ENCODE measurements at regions of chr15 and their contacts with region 1.

Region 1: GRCh38 chr15:93302080-93302765 is 213.2 kb upstream of the RGMA start:
- DNase-seq: no peak
- ATAC-seq: no peak
- H3K4me3 Mint-ChIP-seq: no peak overlapping the region
- H3K27ac Mint-ChIP-seq: no peak overlapping the region
- H3K4me1 Mint-ChIP-seq: no peaks in the 10 kb centered on the region
- H3K27me3 Mint-ChIP-seq: no peaks in the 10 kb centered on the region

Region 2: GRCh38 chr15:92779874-92780273 is 522.3 kb before region 1 on chr15:
- CTCF ChIA-PET with region 1: no interaction called
- POLR2A ChIA-PET with region 1: no interaction called
- intact Hi-C with region 1: loop called in 1 of 2 experiments (anchors 5 kb)
- DNase-seq: no peak
- ATAC-seq: no peak
- H3K4me3 Mint-ChIP-seq: no peak overlapping the region
- H3K27ac Mint-ChIP-seq: no peak overlapping the region
- H3K4me1 Mint-ChIP-seq: no peaks in the 10 kb centered on the region
- H3K27me3 Mint-ChIP-seq: no peaks in the 10 kb centered on the region

Measured in activated CD4-positive, alpha-beta T cell treated with anti-CD3 and anti-CD28 coated beads for 36 hours (primary cell).